ENCODE measurements at regions of chr10 and their contacts with region 1.

Region 1: GRCh38 chr10:79098596-79099015 is 29.8 kb downstream of the ZMIZ1 start:
- DNase-seq: no peak
- H3K4me3 ChIP-seq: no peak overlapping the region
- H3K27ac ChIP-seq: no peak overlapping the region
- H3K4me1 ChIP-seq: peaks cover 42 to 90% of the 10 kb centered on the region in 2 donors
- H3K27me3 ChIP-seq: no peaks in the 10 kb centered on the region
- CTCF ChIP-seq: no peak
- POLR2A ChIP-seq: no peak

Region 2: DNA sequence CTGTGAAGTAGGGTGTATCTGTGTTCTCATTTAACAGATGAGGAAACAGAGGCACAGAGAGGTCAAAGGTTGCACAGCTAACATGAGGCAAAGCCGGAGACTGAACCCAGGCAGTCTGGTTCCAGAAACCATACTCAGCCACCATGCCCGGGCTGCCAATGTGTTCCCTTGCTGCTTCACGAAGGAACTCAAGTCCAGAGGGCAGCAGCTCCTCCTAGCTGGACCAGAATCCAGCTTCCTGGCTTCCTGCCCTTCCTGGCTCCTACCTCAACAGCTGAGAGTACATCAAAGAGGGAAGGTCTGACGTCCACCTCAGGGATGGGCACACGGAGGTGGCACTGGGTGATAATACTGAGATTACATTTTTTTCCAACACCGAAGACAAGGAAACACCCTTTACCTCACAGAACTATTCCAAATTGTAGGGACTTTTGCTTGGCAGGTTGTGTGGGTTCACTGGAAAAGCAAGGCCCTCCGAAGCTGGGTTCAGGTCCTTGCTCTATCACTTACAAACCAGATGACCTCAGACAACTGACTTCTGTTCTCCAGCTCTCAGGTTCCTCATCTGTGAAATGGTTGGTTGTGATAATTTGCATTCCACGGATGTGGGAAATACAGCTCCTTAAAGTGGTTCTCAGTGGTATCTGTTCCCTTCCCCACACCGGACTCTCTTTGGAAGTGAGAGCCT is 184.0 kb before region 1 on chr10:
- intact Hi-C with region 1: no loop called
- DNase-seq: peak in 1 of 7 donors; percentile 39
- H3K4me3 ChIP-seq: no peak overlapping the region
- H3K27ac ChIP-seq: no peak overlapping the region
- H3K4me1 ChIP-seq: peaks cover 0 to 7% of the 10 kb centered on the region in 2 donors
- H3K27me3 ChIP-seq: no peaks in the 10 kb centered on the region
- CTCF ChIP-seq: no peak
- POLR2A ChIP-seq: no peak

Region 3: GRCh38 chr10:79184145-79184625 is 85.6 kb after region 1 on chr10:
- intact Hi-C with region 1: loop called in 1 of 2 experiments (anchors 5 kb)
- DNase-seq: peak in 6 of 7 donors; percentile 66 to 83 (median 74)
- H3K4me3 ChIP-seq: no peak overlapping the region
- H3K27ac ChIP-seq: peak overlapping the region in 4 of 5 donors; percentile 54 to 84 (median 78)
- H3K4me1 ChIP-seq: peaks cover 64 to 98% of the 10 kb centered on the region in 2 donors
- H3K27me3 ChIP-seq: no peaks in the 10 kb centered on the region
- CTCF ChIP-seq: no peak
- POLR2A ChIP-seq: peak in 1 of 2 donors; percentile 55

Region 4: GRCh38 chr10:79242620-79243152 is 144.1 kb after region 1 on chr10:
- intact Hi-C with region 1: no loop called
- DNase-seq: peak; percentile 64 to 87 (median 71)
- H3K4me3 ChIP-seq: peak overlapping the region in 2 of 4 donors; percentile 9 to 65
- H3K27ac ChIP-seq: peak overlapping the region in 4 of 5 donors; percentile 29 to 91 (median 76)
- H3K4me1 ChIP-seq: peaks cover 49 to 80% of the 10 kb centered on the region in 2 donors
- H3K27me3 ChIP-seq: no peaks in the 10 kb centered on the region
- CTCF ChIP-seq: no peak
- POLR2A ChIP-seq: peak; percentile 45 to 53